Mammary epithelial cell (primary cell): ENCODE measurements at regions of chr4 and their contacts with region 1.

Region 1: DNA sequence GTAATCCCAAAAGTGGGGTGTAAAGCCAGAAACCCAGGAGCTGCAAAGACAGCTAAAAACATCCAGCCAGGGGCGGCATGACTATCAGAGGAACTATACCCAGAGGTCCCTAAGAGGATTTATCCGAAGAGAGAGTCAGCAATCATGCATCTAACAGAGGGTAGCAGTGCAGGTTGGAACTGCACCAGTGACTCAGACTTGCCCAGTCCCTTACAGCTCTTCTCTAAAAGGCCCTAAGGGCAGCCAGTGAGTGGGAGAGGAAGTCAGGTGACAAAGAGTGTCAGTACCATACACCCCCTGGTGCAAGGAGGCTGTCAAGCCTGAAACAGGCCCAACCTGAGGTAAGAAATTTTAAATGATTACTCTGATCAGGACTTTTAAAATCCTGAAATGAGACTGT is 88.1 kb downstream of the CAMK2D start:
- DNase-seq: peak; percentile 76
- H3K4me3 ChIP-seq: no peak overlapping the region
- H3K27ac ChIP-seq: no peak overlapping the region
- H3K4me1 ChIP-seq: peaks cover 15% of the 10 kb centered on the region
- H3K27me3 ChIP-seq: no peaks in the 10 kb centered on the region
- CTCF ChIP-seq: peak in 1 of 2 donors; percentile 20

Region 2: GRCh38 chr4:113435893-113436292 is 237.6 kb before region 1 on chr4:
- CTCF ChIA-PET with region 1: interaction called, 15 read pairs
- dilution Hi-C with region 1: no loop called
- in situ Hi-C with region 1: no loop called
- intact Hi-C with region 1: no loop called
- DNase-seq: peak; percentile 96
- H3K4me3 ChIP-seq: no peak overlapping the region
- H3K27ac ChIP-seq: peak overlapping the region; percentile 69
- H3K4me1 ChIP-seq: peaks cover 25% of the 10 kb centered on the region
- H3K27me3 ChIP-seq: no peaks in the 10 kb centered on the region
- CTCF ChIP-seq: no peak